Activated CD4-positive, alpha-beta memory T cell treated with anti-CD3 and anti-CD28 coated beads, Interleukin-2, amount 10 ng/mL, durations not matched to agents 7 days and 5 days (primary cell): ENCODE measurements at regions of chr13 and their contacts with region 1.

Region 1: GRCh38 chr13:49606747-49607648 is 21.3 kb upstream of the ARL11 start:
- DNase-seq: peak; percentile 86
- H3K4me3 Mint-ChIP-seq: peak overlapping the region; percentile 76
- H3K27ac Mint-ChIP-seq: peak overlapping the region; percentile 62
- H3K4me1 Mint-ChIP-seq: peaks cover 6% of the 10 kb centered on the region
- H3K27me3 Mint-ChIP-seq: peaks cover 2% of the 10 kb centered on the region

Region 2: DNA sequence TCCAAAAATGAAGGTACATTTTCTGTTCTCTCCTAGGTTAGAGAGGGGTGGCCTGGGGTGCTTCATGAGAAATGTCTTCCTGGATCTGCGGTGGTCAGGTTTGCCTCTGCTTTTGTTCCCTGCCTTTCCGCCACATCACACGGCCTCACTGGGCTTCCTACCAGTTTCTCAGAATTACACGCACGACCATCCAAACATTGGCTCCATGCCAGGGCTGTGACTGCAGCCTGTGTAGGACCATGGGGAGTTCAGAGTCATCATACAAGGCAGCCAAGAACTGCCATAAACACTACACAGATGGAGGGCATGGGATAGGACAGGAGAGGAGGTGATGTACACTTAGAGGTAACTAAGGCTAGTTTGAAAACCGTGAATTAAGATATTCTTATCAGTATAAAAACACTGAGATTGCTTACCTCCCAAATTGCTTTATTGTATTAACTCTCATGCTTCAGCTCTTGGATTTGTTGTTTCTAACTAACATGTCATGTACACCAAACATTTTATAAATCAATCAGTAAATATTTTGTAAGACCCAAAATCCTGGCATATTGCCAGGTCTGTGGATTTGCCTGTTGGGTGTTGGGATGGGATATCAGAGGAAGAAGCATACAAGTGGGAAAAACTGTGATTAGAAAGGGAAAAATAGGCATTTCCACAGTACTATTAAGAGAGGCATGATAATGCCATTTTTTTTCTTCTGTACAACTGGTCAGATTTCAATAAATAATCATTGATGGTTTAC is 314.1 kb before region 1 on chr13:
- CTCF ChIA-PET with region 1: interaction called, 15 read pairs
- POLR2A ChIA-PET with region 1: interaction called, 3 read pairs
- DNase-seq: peak; percentile 30
- H3K4me3 Mint-ChIP-seq: no peak overlapping the region
- H3K27ac Mint-ChIP-seq: no peak overlapping the region
- H3K4me1 Mint-ChIP-seq: peaks cover 7% of the 10 kb centered on the region
- H3K27me3 Mint-ChIP-seq: no peaks in the 10 kb centered on the region